ENCODE measurements at regions of chr14 and their contacts with region 1.

Region 1: GRCh38 chr14:24984846-24985589 is 64.9 kb downstream of the STXBP6 start:
- DNase-seq: peak; percentile 88
- H3K4me3 ChIP-seq: no peak overlapping the region
- H3K27ac ChIP-seq: peak overlapping the region; percentile 51
- H3K4me1 ChIP-seq: peaks cover 11% of the 10 kb centered on the region
- H3K27me3 ChIP-seq: no peaks in the 10 kb centered on the region
- CTCF ChIP-seq: no peak

Region 2: GRCh38 chr14:25032092-25032784 is 47.2 kb after region 1 on chr14:
- intact Hi-C with region 1: loop called (anchors 5 kb)
- DNase-seq: no peak
- H3K4me3 ChIP-seq: no peak overlapping the region
- H3K27ac ChIP-seq: no peak overlapping the region
- H3K4me1 ChIP-seq: no peaks in the 10 kb centered on the region
- H3K27me3 ChIP-seq: no peaks in the 10 kb centered on the region
- CTCF ChIP-seq: no peak

Region 3: DNA sequence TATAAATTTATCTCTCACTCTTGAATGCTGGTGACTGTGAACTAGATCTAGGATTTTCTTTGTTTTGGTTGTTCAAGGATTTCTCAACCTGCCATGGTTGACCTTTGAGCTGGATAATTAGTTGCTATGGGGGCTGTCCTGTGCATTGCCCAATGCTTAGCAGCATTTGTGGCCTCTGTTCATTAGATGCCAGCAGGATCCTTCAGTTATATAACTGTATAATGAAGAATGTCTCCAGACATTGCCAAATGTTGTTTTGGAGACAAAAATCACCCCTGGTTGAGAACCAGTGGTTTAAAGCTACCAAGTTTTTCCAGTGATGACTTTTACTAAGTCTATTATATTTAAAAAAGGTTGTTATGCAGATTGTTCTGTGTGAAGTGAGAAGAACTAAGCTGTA is 212.9 kb after region 1 on chr14:
- intact Hi-C with region 1: no loop called
- DNase-seq: no peak
- H3K4me3 ChIP-seq: no peak overlapping the region
- H3K27ac ChIP-seq: no peak overlapping the region
- H3K4me1 ChIP-seq: no peaks in the 10 kb centered on the region
- H3K27me3 ChIP-seq: no peaks in the 10 kb centered on the region
- CTCF ChIP-seq: no peak

Measured in colonic mucosa (tissue), 4 donors.